ENCODE measurements at regions of chr11 and their contacts with region 1.

Region 1: DNA sequence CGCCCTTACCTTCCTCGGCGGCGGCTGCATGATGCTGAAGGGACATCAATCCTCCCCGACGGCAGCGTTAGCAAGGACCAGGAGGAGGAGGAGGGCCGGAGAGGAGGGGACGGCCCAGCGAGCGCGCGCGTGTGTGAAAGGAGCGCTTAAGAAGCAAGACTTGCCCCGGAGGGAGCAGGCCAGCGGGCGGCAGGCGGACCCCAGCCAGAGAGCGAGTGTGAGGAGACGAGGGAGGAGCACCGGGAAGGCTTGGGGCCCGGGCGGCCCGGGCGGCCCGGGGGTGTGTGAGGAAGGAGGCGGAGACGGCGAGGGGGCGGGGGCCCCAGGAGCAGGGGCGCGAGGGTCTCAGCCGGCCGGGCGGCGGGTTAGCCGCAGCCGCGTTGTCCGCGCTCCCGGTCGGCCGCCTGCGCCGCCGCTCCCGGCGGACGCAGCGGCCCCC is 251 bp downstream of the FCHSD2 start:
- DNase-seq: peak; percentile 62
- ATAC-seq: peak; percentile 44
- H3K4me3 ChIP-seq: peak overlapping the region; percentile 87
- H3K27ac ChIP-seq: peak overlapping the region; percentile 70
- H3K4me1 ChIP-seq: peaks cover 20% of the 10 kb centered on the region
- H3K27me3 ChIP-seq: no peaks in the 10 kb centered on the region
- CTCF ChIP-seq: no peak

Region 2: DNA sequence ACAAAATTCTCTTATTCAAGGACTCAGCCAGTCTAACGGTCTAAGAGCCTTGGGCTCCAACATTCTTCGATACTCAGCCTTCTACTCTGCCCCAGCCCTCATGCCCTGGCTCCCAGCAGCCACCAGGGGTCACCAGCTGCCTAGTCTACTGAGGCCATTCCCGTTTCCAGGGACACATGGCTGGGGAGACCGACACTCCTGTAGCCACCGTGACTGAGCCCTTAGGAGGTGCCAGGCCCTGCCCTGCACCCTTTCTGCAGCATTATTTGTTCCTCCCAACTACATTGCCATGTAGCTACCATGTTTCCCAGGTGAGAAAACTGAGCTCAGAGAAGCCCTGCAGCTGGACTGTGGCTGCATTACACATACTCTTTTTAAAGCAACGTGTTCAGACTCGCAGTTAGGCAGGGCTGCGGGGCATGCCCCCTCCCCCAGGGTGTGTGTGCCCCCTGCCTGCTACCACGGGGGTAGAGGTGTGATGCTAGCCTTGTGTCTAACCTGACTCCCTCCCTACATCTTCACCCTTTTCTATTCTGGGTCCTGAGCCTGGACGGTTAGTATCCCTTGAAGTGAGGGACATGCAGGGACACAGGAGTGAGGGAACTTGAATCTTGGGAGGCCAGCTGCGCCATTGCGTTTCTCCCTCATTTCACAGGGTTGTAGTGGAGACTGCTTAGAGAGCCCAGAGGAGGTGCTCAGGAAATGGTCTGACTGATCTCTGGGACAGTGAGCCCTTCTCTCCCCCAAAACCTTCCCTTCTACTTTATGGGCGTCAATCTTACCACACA is 310.2 kb before region 1 on chr11:
- CTCF ChIA-PET with region 1: no interaction called
- POLR2A ChIA-PET with region 1: no interaction called
- intact Hi-C with region 1: loop called (anchors 1 kb)
- DNase-seq: peak; percentile 76
- ATAC-seq: peak; percentile 93
- H3K4me3 ChIP-seq: no peak overlapping the region
- H3K27ac ChIP-seq: no peak overlapping the region
- H3K4me1 ChIP-seq: no peaks in the 10 kb centered on the region
- H3K27me3 ChIP-seq: no peaks in the 10 kb centered on the region
- CTCF ChIP-seq: peak; percentile 91

Region 3: DNA sequence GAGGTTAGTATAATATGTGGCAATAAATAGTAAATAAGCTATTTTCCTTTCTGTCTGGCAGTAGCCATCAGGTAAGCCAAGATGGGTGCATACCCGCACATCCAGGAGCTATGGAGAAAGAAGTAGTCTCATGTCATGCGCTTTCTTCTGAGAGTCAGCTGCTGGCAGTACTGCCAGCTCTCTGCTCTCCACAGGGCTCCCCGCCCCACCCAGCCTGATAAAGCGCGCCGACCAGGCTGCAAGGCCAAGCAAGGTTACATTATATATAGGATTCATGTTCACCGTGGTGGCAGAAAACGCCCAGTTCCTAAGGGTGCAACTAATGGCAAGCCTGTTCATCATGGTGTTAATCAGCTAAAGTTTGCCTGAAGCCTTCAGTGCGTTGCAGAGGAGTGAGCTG is 201.4 kb before region 1 on chr11:
- CTCF ChIA-PET with region 1: no interaction called
- POLR2A ChIA-PET with region 1: no interaction called
- intact Hi-C with region 1: loop called (anchors 1 kb)
- DNase-seq: no peak
- ATAC-seq: no peak
- H3K4me3 ChIP-seq: no peak overlapping the region
- H3K27ac ChIP-seq: no peak overlapping the region
- H3K4me1 ChIP-seq: no peaks in the 10 kb centered on the region
- H3K27me3 ChIP-seq: no peaks in the 10 kb centered on the region
- CTCF ChIP-seq: no peak

Region 4: DNA sequence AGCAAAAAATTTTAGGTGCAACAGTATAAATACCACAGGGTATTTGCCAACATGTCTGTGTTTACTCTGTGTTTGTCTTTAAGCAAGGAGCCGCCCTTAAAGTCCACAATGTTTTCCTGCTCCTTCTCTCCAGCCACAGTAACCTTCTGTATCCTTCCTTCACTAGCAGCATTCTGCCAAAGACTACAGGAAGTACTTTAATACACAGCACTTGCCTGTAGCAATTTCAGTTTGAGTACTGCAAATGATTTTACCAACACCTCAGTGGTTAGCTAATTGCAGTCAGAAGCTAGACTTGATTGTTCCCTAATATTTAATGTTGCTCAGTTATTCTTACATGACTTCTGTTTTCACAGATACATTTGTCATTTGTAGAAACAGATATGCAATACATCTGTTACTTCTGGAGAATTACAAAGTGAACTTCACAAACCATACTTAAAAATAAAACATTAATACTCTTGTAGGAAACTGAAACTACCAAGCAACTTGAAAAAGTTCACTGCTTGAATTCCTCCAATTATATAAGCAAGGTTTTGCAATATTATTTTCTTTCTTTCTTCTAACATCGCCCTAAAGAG is 68.9 kb before region 1 on chr11:
- CTCF ChIA-PET with region 1: no interaction called
- POLR2A ChIA-PET with region 1: no interaction called
- intact Hi-C with region 1: loop called (anchors 5 kb)
- DNase-seq: peak; percentile 81
- ATAC-seq: peak; percentile 99
- H3K4me3 ChIP-seq: peak overlapping the region; percentile 16
- H3K27ac ChIP-seq: peak overlapping the region; percentile 15
- H3K4me1 ChIP-seq: peaks cover 25% of the 10 kb centered on the region
- H3K27me3 ChIP-seq: no peaks in the 10 kb centered on the region
- CTCF ChIP-seq: no peak

Region 5: GRCh38 chr11:73177778-73178577 is 36.1 kb after region 1 on chr11:
- CTCF ChIA-PET with region 1: interaction called, 17 read pairs
- POLR2A ChIA-PET with region 1: no interaction called
- intact Hi-C with region 1: loop called (anchors 1 kb)
- DNase-seq: peak; percentile 92
- ATAC-seq: peak; percentile 88
- H3K4me3 ChIP-seq: no peak overlapping the region
- H3K27ac ChIP-seq: no peak overlapping the region
- H3K4me1 ChIP-seq: peaks cover 21% of the 10 kb centered on the region
- H3K27me3 ChIP-seq: no peaks in the 10 kb centered on the region
- CTCF ChIP-seq: peak; percentile 97